ENCODE measurements at regions of chr14 and their contacts with region 1.

Region 1: GRCh38 chr14:69586404-69586803 is 11.7 kb upstream of the CCDC177 start:
- DNase-seq: no peak
- ATAC-seq: no peak
- H3K4me3 Mint-ChIP-seq: no peak overlapping the region
- H3K27ac Mint-ChIP-seq: no peak overlapping the region
- H3K4me1 Mint-ChIP-seq: peaks cover 20% of the 10 kb centered on the region
- H3K27me3 Mint-ChIP-seq: no peaks in the 10 kb centered on the region

Region 2: DNA sequence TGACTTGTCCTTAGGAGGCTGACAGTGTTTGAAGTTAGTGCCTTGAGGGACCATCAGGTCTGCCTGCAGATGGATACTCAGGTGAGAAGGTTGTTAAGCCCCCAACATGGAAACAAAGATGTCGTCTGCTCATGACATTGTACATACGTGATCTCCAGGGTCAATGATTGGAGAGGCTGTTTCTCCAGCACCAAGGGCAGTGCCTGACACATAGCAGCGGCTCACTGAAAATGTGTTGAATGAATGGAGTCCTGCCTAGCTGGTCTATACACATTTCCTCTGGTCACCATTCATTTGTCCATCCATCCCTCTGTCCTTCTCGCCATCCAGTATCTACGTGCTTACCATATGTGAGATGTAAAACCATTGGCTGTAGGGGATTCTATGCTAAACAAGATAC is 18.8 kb before region 1 on chr14:
- CTCF ChIA-PET with region 1: no interaction called
- DNase-seq: no peak
- ATAC-seq: no peak
- H3K4me3 Mint-ChIP-seq: no peak overlapping the region
- H3K27ac Mint-ChIP-seq: no peak overlapping the region
- H3K4me1 Mint-ChIP-seq: peaks cover 5% of the 10 kb centered on the region
- H3K27me3 Mint-ChIP-seq: peaks cover 94% of the 10 kb centered on the region

Region 3: GRCh38 chr14:69600304-69600891 is 14.0 kb after region 1 on chr14:
- CTCF ChIA-PET with region 1: interaction called, 13 read pairs
- DNase-seq: no peak
- ATAC-seq: no peak
- H3K4me3 Mint-ChIP-seq: no peak overlapping the region
- H3K27ac Mint-ChIP-seq: no peak overlapping the region
- H3K4me1 Mint-ChIP-seq: peaks cover 4% of the 10 kb centered on the region
- H3K27me3 Mint-ChIP-seq: no peaks in the 10 kb centered on the region

Measured in activated CD8-positive, alpha-beta memory T cell treated with anti-CD3 and anti-CD28 coated beads, Interleukin-2, amount 10 ng/mL, durations not matched to agents 7 days and 5 days (primary cell).